CD8-positive, alpha-beta T cell (primary cell): ENCODE measurements at regions of chr17 and their contacts with region 1.

Region 1: DNA sequence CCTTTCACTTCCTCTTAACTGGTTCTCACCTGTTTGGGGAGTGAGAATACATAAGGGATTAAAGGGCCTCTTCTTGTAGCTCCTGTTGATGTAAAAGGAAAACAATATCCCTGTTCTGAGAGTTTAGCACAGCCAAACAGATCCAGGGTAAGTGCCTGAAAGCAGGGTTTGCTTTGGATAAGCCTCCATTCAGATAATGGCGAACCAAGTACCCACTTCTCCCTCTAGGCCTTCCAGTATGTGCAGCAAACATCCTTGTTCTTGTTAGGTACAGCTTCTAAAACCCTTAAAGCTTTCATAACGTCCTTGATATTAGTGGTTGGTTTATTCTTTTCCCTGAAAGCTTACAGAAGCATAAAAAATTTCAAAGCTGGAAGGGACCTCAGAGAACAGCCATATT is 130.6 kb upstream of the DNAH9 start:
- DNase-seq: no peak
- ATAC-seq: no peak
- H3K4me3 ChIP-seq: no peak overlapping the region
- H3K4me3 Mint-ChIP-seq: no peak overlapping the region
- H3K27ac ChIP-seq: no peak overlapping the region
- H3K27ac Mint-ChIP-seq: no peak overlapping the region
- H3K4me1 ChIP-seq: no peaks in the 10 kb centered on the region
- H3K4me1 Mint-ChIP-seq: no peaks in the 10 kb centered on the region
- H3K27me3 ChIP-seq: no peaks in the 10 kb centered on the region
- H3K27me3 Mint-ChIP-seq: no peaks in the 10 kb centered on the region
- CTCF ChIP-seq: no peak

Region 2: DNA sequence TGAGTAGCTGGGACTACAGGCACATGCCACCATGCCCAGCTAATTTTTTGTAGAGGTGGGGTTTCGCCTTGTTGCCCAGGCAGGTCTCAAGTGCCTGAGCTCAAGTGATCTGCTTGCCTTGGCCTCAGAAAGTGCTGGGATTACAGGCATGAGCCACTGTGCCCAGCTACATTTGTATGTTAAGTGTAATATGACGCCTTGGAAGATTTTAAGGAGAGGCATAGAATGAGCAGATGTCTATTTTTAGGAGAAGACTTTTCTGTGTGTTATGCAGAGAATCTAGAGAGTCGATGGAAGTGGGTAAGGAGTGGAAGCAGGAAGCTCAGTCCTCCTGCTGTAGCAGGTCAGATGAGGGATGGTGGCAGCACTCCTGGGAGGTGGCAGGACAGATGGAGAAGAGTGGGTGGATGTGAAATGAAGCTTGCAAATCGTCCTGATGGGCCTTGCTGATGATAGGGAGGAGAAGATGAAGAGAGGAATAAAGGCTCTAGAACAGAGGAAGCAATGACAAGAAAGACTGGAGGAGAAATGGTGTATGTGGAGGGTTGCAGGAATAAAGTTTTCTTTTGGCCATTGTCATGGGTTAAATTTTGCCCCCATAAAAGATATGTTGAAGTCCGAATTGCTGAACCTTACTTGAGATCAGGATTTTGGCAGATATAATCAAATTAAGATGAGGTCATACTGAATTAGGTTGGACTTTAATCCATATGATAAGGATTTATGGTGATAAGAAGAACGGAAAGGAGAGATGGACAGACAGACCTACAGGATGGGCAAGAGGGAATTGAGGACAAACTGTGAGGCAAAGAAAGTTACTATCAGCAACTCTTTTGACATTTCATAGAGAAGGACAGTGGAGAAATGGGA is 101.1 kb before region 1 on chr17:
- CTCF ChIA-PET with region 1: no interaction called
- POLR2A ChIA-PET with region 1: no interaction called
- intact Hi-C with region 1: no loop called
- DNase-seq: no peak
- ATAC-seq: no peak
- H3K4me3 ChIP-seq: no peak overlapping the region
- H3K4me3 Mint-ChIP-seq: no peak overlapping the region
- H3K27ac ChIP-seq: no peak overlapping the region
- H3K27ac Mint-ChIP-seq: no peak overlapping the region
- H3K4me1 ChIP-seq: no peaks in the 10 kb centered on the region
- H3K4me1 Mint-ChIP-seq: no peaks in the 10 kb centered on the region
- H3K27me3 ChIP-seq: no peaks in the 10 kb centered on the region
- H3K27me3 Mint-ChIP-seq: no peaks in the 10 kb centered on the region
- CTCF ChIP-seq: no peak

Region 3: GRCh38 chr17:11430751-11431150 is 36.9 kb before region 1 on chr17:
- CTCF ChIA-PET with region 1: no interaction called
- POLR2A ChIA-PET with region 1: no interaction called
- intact Hi-C with region 1: no loop called
- DNase-seq: no peak
- ATAC-seq: no peak
- H3K4me3 ChIP-seq: no peak overlapping the region
- H3K4me3 Mint-ChIP-seq: no peak overlapping the region
- H3K27ac ChIP-seq: no peak overlapping the region
- H3K27ac Mint-ChIP-seq: no peak overlapping the region
- H3K4me1 ChIP-seq: no peaks in the 10 kb centered on the region
- H3K4me1 Mint-ChIP-seq: no peaks in the 10 kb centered on the region
- H3K27me3 ChIP-seq: no peaks in the 10 kb centered on the region
- H3K27me3 Mint-ChIP-seq: no peaks in the 10 kb centered on the region
- CTCF ChIP-seq: no peak

Region 4: GRCh38 chr17:11515901-11516300 is 48.3 kb after region 1 on chr17:
- CTCF ChIA-PET with region 1: no interaction called
- POLR2A ChIA-PET with region 1: no interaction called
- intact Hi-C with region 1: loop called in 1 of 2 experiments (anchors 5 kb)
- DNase-seq: no peak
- ATAC-seq: no peak
- H3K4me3 ChIP-seq: no peak overlapping the region
- H3K4me3 Mint-ChIP-seq: no peak overlapping the region
- H3K27ac ChIP-seq: no peak overlapping the region
- H3K27ac Mint-ChIP-seq: no peak overlapping the region
- H3K4me1 ChIP-seq: no peaks in the 10 kb centered on the region
- H3K4me1 Mint-ChIP-seq: no peaks in the 10 kb centered on the region
- H3K27me3 ChIP-seq: no peaks in the 10 kb centered on the region
- H3K27me3 Mint-ChIP-seq: no peaks in the 10 kb centered on the region
- CTCF ChIP-seq: no peak

Region 5: GRCh38 chr17:11535231-11535630 is 67.6 kb after region 1 on chr17:
- CTCF ChIA-PET with region 1: no interaction called
- POLR2A ChIA-PET with region 1: no interaction called
- intact Hi-C with region 1: no loop called
- DNase-seq: no peak
- ATAC-seq: no peak
- H3K4me3 ChIP-seq: no peak overlapping the region
- H3K4me3 Mint-ChIP-seq: no peak overlapping the region
- H3K27ac ChIP-seq: no peak overlapping the region
- H3K27ac Mint-ChIP-seq: no peak overlapping the region
- H3K4me1 ChIP-seq: no peaks in the 10 kb centered on the region
- H3K4me1 Mint-ChIP-seq: no peaks in the 10 kb centered on the region
- H3K27me3 ChIP-seq: no peaks in the 10 kb centered on the region
- H3K27me3 Mint-ChIP-seq: no peaks in the 10 kb centered on the region
- CTCF ChIP-seq: no peak